ENCODE measurements at regions of chr2 and their contacts with region 1.

Region 1: DNA sequence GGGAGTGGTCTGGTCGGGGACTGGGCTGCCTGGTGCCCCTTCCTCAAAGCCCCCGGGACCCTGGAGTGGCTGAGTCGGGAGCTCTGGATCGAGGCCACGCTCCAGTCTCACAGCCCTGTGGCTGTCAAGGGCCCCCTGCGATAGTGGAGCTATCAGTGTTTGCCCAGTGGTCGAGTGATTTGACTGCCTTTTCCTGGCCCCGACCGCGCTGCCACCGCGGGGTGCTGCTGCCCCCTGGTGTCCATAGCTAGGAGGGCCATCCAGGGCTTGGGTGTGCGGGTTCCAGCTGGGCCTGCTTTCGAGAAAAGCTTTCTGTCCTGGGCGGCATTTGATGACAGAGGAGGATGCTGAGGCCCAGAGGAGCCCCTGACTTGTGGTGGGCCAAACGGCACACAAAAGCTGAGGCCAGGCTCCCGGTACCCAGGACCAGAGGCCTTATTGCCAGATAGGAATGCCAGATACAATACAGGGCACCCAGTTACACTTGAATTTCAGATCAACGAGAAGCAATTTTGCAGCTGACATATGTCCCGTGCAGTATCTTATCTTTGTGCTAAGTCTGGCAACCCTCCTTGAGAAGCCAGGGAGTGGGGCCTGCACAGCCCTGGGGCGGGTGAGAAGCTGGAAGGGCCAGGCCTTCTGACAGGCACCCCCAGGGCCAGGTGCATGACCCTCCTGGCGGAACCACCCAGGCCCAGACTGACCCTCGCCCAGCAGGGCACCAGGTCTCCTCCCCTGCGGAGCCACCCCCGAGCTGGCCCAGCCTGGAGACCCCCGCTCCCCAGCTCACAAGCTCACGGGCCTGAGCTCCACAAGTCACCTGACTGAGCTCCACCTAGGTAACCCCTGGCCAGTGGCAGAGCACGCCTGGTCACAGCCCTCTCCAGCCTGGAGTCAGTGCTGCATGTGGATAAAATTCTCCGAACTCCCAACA is 13.0 kb downstream of the ODC1 start:
- DNase-seq: peak; percentile 73
- H3K4me3 Mint-ChIP-seq: no peak overlapping the region
- H3K27ac Mint-ChIP-seq: no peak overlapping the region
- H3K4me1 Mint-ChIP-seq: peaks cover 13% of the 10 kb centered on the region
- H3K27me3 Mint-ChIP-seq: peaks cover 46% of the 10 kb centered on the region

Region 2: GRCh38 chr2:10122386-10123280 is 312.5 kb before region 1 on chr2 and contains the start of gene RRM2:
- CTCF ChIA-PET with region 1: interaction called, 40 read pairs
- DNase-seq: peak; percentile 96
- H3K4me3 Mint-ChIP-seq: peak within 1 kb of the TSS; percentile 95
- H3K27ac Mint-ChIP-seq: peak within 1 kb of the TSS; percentile 98
- H3K4me1 Mint-ChIP-seq: peaks cover 75% of the 10 kb centered on the region
- H3K27me3 Mint-ChIP-seq: no peaks in the 10 kb centered on the region

Region 3: DNA sequence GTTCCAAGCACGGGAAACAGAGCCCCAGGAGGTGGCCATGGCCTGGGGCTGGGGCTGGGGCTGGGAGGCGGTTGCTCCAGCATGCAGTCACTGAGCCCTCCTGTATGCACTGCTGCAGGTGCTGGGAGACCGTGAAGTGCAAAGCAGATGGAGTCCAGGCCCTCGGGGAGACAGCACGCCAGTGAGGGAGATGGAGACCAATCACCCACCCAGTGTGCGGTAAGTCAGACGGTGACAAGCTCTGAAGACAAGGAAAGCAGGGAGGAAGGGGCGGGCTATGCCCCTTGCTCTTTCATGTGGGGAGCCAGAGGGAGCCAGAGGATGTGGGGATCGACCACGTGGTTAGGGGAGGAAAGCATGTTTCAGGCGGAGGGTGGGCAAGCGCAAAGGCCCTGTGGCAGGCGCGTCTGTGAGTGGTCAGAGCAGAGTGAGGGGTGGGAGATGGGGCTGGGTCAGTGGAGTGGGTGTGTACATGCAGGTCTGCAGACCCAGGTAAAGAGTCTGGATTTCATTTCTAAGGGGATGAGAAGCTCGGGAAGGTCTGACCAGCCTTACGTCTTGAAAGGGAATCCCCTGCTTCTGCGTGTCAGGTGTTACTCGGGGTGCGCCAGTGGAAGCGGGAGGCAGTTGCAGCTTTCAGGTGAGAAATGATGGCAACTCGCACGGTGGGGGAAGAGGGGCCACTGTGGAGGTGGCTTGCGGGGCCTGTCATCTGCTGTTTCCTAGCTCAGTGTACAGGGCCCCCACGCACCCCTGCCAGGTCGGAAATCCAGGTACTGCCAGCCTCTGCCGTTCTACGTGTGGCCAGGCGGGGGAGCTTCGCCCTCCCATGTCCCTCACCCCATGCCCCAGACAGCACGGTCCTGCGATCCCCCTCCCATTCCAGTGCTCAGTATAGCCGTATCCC is 293.2 kb before region 1 on chr2:
- CTCF ChIA-PET with region 1: interaction called, 33 read pairs
- DNase-seq: peak; percentile 74
- H3K4me3 Mint-ChIP-seq: peak overlapping the region; percentile 10
- H3K27ac Mint-ChIP-seq: peak overlapping the region; percentile 84
- H3K4me1 Mint-ChIP-seq: peaks cover 51% of the 10 kb centered on the region
- H3K27me3 Mint-ChIP-seq: no peaks in the 10 kb centered on the region

Region 4: DNA sequence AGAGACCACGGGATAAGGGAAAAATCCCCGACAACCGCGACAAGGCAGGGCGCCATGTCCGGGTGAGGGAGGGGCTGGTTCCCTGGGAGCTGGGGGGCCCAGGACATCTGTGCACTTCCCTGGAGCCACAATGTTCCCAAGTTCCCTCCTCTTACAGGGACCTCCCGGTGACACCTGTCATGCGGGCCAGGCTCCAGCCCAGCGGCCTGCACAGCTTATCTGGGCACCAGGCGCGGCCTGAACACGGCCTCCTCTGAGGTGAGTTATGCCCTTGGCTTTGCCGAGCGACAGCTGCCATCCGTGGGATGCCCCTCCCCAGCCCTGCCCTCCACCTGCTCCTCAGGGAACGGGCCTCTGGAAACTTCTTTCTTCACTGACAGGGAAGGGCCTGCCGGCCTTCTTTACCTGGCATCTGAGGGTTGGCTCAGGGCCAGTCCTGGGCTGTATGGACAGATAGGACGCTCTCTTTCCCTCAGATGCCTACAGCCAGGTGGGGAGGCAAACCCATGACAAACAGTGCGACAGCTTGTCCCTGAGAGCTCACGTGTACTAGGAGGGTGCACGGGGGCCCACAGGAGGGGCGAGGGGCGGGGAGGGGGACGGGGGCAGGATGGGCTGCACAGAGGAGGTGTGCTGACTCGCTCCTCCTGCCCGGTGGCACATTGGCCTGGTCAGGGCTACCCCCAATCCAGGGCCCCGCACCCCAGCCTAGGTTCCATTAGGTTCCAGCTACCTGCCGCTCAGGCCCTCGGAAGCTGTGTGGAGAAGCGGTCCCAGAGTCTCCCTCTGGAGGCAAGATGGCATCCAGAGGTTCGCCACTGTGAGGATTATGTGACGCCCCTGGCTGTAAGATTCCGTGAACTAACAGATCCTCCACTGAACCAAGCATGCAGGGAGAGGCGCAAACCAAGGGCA is 167.3 kb before region 1 on chr2:
- CTCF ChIA-PET with region 1: interaction called, 19 read pairs
- DNase-seq: no peak
- H3K4me3 Mint-ChIP-seq: no peak overlapping the region
- H3K27ac Mint-ChIP-seq: no peak overlapping the region
- H3K4me1 Mint-ChIP-seq: peaks cover 7% of the 10 kb centered on the region
- H3K27me3 Mint-ChIP-seq: peaks cover 38% of the 10 kb centered on the region

Region 5: DNA sequence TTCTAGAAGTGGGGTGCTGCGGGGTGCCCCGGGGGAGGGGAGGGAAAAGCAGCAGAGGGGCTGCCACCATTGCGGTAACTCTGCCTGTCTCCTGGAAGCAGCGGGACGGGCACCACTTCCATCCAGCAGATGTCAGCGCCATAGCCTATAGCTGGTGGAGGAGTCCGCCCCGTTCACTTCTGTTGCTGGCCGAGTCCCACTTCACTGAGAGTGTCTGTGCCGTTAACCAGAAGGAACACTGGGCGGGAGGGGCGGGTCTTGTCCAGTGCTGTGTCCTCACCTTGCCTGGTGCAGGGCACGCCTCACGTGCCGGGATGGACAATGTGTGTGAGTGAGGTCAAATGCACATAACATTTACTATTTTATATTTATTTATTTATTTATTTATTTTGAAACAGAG is 32.2 kb after region 1 on chr2:
- CTCF ChIA-PET with region 1: no interaction called
- DNase-seq: no peak
- H3K4me3 Mint-ChIP-seq: no peak overlapping the region
- H3K27ac Mint-ChIP-seq: no peak overlapping the region
- H3K4me1 Mint-ChIP-seq: no peaks in the 10 kb centered on the region
- H3K27me3 Mint-ChIP-seq: peaks cover 31% of the 10 kb centered on the region

Region 6: DNA sequence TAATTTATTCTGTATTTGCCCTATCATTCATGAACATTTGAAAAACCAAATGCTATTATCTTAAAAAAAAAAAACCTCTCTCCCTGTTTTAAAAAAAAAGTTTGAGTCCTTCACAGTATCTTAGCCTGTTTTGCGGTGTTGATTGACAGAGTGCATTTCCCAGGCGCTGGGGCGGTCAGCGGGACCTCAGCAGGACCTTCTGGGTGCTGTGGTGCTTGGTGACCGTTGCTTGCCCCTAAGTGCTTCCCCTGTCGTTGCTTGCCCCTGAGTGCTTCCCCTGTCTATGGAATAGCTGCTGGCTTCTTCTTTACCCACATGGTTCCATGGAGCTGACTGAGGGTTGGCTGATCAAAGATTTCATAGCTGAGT is 298.4 kb after region 1 on chr2:
- CTCF ChIA-PET with region 1: no interaction called
- DNase-seq: no peak
- H3K4me3 Mint-ChIP-seq: no peak overlapping the region
- H3K27ac Mint-ChIP-seq: no peak overlapping the region
- H3K4me1 Mint-ChIP-seq: no peaks in the 10 kb centered on the region
- H3K27me3 Mint-ChIP-seq: peaks cover 57% of the 10 kb centered on the region

Measured in activated naive CD4-positive, alpha-beta T cell treated with anti-CD3 and anti-CD28 coated beads, Interleukin-2, amount 10 ng/mL, durations not matched to agents 7 days and 5 days (primary cell).